GM13976 (cell line): ENCODE measurements at regions of chr10 and their contacts with region 1.

Region 1: GRCh38 chr10:88392222-88392621 is 190.9 kb downstream of the RNLS start:
- DNase-seq: peak; percentile 7
- CTCF ChIP-seq: no peak

Region 2: DNA sequence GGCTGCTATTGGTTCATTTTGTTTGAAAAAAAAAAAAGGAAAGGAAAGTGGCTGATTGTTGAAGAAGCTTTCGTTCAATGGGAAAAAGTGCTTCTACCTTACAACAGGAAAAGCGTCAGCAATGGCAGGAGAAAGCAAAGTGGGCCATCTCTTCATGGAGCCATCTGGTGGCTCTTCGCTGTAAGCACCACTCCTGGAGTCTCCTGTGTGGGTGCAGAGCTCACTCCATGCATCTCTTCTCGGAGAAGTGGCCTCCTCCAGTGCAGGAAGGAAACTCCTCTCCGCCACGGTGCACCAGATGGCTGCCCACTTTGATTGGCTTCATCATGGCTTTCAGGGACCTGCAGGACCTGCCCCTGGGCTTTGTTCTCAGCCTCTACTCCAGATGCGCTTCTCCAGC is 277.9 kb before region 1 on chr10:
- in situ Hi-C with region 1: no loop called
- DNase-seq: no peak
- CTCF ChIP-seq: peak; percentile 63

Region 3: DNA sequence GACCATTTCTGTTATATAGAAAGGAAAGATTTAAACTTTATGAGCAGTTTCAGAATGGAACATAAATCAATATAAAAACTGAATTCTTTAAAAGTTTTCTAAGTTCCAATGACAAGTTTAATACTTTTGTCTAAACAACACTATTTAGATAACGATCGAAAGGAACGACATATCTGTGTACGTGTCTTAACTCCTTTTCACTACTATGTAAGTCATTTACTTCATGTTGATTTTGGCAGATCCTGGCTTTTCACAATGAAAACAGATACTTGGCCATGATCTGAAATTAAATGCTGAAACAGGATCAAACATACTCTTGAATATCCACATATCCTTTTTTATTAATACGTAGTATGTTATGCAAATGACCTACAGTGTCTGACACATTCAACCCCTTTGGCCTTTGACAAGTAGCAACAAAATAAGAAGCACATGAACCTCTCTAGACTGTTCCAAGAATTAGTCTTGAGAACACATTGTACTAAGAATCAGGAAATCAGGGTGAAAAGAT is 148.9 kb after region 1 on chr10:
- in situ Hi-C with region 1: loop called (anchors 10 kb)
- DNase-seq: no peak
- CTCF ChIP-seq: no peak